Tibial artery (tissue), 4 donors: ENCODE measurements at regions of chr9 and their contacts with region 1.

Region 1: DNA sequence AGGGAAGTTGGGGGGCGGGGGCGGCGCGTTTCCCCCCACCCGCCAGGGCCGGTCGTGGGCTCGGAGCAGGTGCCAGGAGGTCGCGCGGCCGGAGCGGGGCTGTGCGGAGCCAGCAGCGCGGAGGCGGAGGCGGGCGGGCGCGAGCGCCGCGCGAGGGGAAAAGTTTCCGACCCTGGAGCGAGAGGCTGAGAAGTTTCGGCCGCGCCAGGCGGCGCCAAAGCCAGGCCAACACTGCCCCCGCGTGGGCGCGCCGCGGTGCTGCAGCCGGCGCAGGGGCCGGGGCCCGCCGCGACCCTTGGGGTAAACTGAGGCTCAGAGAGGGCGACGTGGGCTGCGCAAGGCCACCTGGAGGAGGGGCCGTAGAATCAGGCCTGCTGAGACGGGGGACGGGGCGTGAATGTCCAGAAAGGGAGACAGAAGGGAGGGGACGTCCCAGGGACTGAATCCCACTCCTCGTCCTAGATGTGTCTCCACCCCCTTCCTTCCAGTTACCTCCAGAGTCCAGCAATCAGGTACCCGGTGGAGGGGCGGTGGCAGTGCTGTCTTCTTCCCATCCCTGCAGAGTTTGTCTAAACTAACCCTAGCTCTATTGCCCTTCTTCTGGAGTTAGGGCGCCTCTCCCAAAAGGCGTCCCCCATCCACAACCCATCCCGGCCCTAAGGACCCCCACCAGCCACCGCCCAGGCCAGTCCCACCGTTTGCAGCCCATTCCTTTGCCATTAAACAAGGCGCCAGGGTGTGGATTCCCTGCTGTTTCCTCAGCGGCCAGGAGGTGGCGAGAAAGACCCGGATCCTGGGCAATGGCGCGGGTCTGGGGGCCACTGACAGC is 10.2 kb downstream of the C9orf50 start:
- DNase-seq: peak; percentile 73 to 87
- H3K4me3 ChIP-seq: peak overlapping the region; percentile 66 to 89
- H3K27ac ChIP-seq: peak overlapping the region; percentile 94 to 95
- H3K4me1 ChIP-seq: peaks cover 0 to 52% (median 44%) of the 10 kb centered on the region in 4 donors
- H3K27me3 ChIP-seq: no peaks in the 10 kb centered on the region
- CTCF ChIP-seq: peak; percentile 87 to 100

Region 2: GRCh38 chr9:129139993-129140396 is 470.7 kb before region 1 on chr9:
- intact Hi-C with region 1: loop called (anchors 2 kb)
- DNase-seq: peak; percentile 98 to 99
- H3K4me3 ChIP-seq: peak overlapping the region; percentile 45 to 57
- H3K27ac ChIP-seq: peak overlapping the region; percentile 91 to 99
- H3K4me1 ChIP-seq: peaks cover 18 to 79% (median 74%) of the 10 kb centered on the region in 4 donors
- H3K27me3 ChIP-seq: no peaks in the 10 kb centered on the region
- CTCF ChIP-seq: no peak

Region 3: GRCh38 chr9:129320575-129321263 is 290.0 kb before region 1 on chr9:
- intact Hi-C with region 1: loop called (anchors 10 kb)
- DNase-seq: peak; percentile 82 to 88
- H3K4me3 ChIP-seq: peak overlapping the region; percentile 49 to 56
- H3K27ac ChIP-seq: peak overlapping the region; percentile 90 to 93
- H3K4me1 ChIP-seq: peaks cover 13 to 90% (median 82%) of the 10 kb centered on the region in 4 donors
- H3K27me3 ChIP-seq: no peaks in the 10 kb centered on the region
- CTCF ChIP-seq: no peak

Region 4: DNA sequence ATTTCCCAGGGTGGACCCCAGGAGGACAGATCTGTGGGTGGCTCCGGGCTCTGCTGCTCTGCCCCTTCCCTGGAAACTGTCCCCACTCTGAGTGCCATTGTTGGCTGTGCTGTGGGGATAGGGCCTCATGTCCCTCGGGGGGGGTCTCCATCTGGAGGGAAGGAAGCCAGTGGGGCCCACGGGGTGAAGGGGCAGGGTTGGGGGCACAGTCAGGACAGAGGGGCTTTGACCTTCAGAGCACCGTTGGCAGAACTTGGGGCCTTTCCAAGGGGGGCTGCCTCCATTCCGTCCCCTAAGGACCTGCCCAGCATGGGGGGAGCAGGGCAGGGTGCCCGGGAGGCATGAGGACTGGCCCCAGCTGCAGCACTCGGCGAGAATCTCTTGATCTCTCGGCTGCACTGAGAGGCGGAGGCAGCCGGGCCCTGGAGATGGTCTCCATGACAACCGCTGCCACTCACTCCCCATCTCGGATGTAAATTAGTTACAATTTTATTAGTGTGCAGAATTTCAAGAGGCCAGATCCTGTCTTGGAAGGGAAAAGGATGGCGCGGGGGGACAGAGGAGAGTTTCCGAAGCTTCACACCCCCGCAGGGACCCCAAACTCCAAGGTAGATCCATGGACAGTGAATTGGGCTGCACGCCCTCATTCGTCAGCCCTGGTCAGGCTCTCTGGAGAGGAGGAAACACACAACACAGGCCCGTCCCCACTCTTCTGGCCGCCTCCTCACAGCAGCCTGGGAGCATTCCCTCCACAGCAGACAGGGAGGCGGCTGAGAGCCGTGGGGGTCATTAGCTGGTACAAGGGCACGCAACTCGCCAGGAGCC is 216.4 kb before region 1 on chr9:
- intact Hi-C with region 1: loop called (anchors 10 kb)
- DNase-seq: peak in 1 of 2 donors; percentile 59
- H3K4me3 ChIP-seq: no peak overlapping the region
- H3K27ac ChIP-seq: no peak overlapping the region
- H3K4me1 ChIP-seq: no peaks in the 10 kb centered on the region
- H3K27me3 ChIP-seq: no peaks in the 10 kb centered on the region
- CTCF ChIP-seq: no peak

Region 5: GRCh38 chr9:129495534-129496325 is 115.0 kb before region 1 on chr9:
- intact Hi-C with region 1: loop called (anchors 5 kb)
- DNase-seq: peak; percentile 92 to 96
- H3K4me3 ChIP-seq: peak overlapping the region; percentile 62 to 73
- H3K27ac ChIP-seq: peak overlapping the region; percentile 100
- H3K4me1 ChIP-seq: peaks cover 10 to 91% (median 87%) of the 10 kb centered on the region in 4 donors
- H3K27me3 ChIP-seq: no peaks in the 10 kb centered on the region
- CTCF ChIP-seq: peak in 1 of 2 experiments; percentile 23